ENCODE measurements at regions of chr9 and their contacts with region 1.

Region 1: DNA sequence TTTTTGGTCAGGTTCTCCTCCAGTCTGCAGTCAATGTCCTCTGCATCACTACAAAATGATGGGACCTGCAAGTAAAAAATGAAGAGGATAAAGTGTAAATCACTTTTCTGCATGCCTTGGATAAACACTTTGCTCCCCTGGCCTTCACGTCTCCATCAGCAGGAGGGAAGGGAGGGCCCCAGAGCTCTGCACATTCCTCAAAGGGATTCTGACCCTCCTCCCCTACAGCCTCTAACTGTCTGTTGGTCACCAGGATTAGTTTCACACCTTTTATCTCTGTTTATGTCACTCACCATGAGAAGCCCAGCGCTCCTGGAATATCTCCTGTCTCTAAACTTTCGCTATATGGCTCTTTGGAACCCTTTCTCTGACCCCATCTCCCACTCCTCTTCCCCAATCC is 103.3 kb downstream of the SVEP1 start:
- DNase-seq: no peak
- H3K4me3 Mint-ChIP-seq: no peak overlapping the region
- H3K27ac Mint-ChIP-seq: no peak overlapping the region
- H3K4me1 Mint-ChIP-seq: no peaks in the 10 kb centered on the region
- H3K27me3 Mint-ChIP-seq: peaks cover 3% of the 10 kb centered on the region

Region 2: GRCh38 chr9:110351009-110351467 is 125.2 kb before region 1 on chr9:
- CTCF ChIA-PET with region 1: no interaction called
- intact Hi-C with region 1: no loop called
- DNase-seq: peak; percentile 4
- H3K4me3 Mint-ChIP-seq: no peak overlapping the region
- H3K27ac Mint-ChIP-seq: no peak overlapping the region
- H3K4me1 Mint-ChIP-seq: no peaks in the 10 kb centered on the region
- H3K27me3 Mint-ChIP-seq: no peaks in the 10 kb centered on the region

Region 3: GRCh38 chr9:110452227-110452801 is 23.9 kb before region 1 on chr9:
- CTCF ChIA-PET with region 1: no interaction called
- intact Hi-C with region 1: no loop called
- DNase-seq: no peak
- H3K4me3 Mint-ChIP-seq: no peak overlapping the region
- H3K27ac Mint-ChIP-seq: no peak overlapping the region
- H3K4me1 Mint-ChIP-seq: no peaks in the 10 kb centered on the region
- H3K27me3 Mint-ChIP-seq: peaks cover 7% of the 10 kb centered on the region

Region 4: GRCh38 chr9:110538225-110539041 is 62.2 kb after region 1 on chr9:
- CTCF ChIA-PET with region 1: no interaction called
- intact Hi-C with region 1: loop called (anchors 10 kb)
- DNase-seq: no peak
- H3K4me3 Mint-ChIP-seq: no peak overlapping the region
- H3K27ac Mint-ChIP-seq: no peak overlapping the region
- H3K4me1 Mint-ChIP-seq: no peaks in the 10 kb centered on the region
- H3K27me3 Mint-ChIP-seq: peaks cover 4% of the 10 kb centered on the region